Activated B cell treated with CpG ODN at 0.5 μM for 24 hours (primary cell): ENCODE measurements at regions of chr3 and their contacts with region 1.

Region 1: DNA sequence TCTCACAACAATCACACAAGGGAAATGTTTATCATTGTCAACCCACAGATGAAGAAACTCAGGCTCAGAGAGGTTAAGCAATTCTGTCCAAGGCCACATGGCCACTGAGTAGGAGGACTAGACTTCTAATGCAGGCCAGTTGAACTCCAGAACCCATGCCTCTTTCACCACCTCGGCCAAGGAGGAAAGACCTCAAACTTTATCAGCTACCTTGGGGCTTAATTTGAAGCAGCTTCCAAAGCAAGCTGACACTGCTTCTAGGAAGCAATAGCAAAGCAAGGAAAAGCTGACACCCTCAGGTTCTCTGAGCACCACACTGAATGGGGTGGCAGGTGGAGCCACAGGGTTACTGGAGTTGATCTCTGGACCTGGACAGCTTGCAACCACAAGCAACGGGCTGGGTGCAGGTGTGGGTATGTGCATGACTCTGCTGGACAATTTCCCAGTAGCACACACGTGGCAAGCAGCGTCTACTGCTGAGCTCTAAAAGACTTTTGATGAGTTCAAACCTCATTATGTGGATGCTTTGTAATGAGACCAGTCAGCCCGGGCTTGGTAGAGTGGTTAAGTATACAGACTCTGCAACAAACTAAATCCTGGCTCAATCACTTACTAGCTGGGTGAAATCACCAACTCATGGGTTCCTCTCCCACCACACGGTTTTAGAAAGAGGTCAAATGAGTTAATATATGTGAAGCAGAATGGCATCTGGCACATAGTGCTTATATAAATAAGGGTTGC is 23.1 kb downstream of the CCNL1 start:
- DNase-seq: no peak
- ATAC-seq: no peak
- H3K4me3 Mint-ChIP-seq: no peak overlapping the region
- H3K27ac Mint-ChIP-seq: no peak overlapping the region
- H3K4me1 Mint-ChIP-seq: peaks cover 5% of the 10 kb centered on the region
- H3K27me3 Mint-ChIP-seq: no peaks in the 10 kb centered on the region
- CTCF ChIP-seq: no peak

Region 2: GRCh38 chr3:156044634-156044975 is 1092.2 kb before region 1 on chr3:
- CTCF ChIA-PET with region 1: no interaction called
- POLR2A ChIA-PET with region 1: no interaction called
- intact Hi-C with region 1: loop called (anchors 2 kb)
- DNase-seq: no peak
- ATAC-seq: no peak
- H3K4me3 Mint-ChIP-seq: no peak overlapping the region
- H3K27ac Mint-ChIP-seq: no peak overlapping the region
- H3K4me1 Mint-ChIP-seq: no peaks in the 10 kb centered on the region
- H3K27me3 Mint-ChIP-seq: peaks cover 20% of the 10 kb centered on the region
- CTCF ChIP-seq: no peak

Region 3: GRCh38 chr3:156449712-156450574 is 686.9 kb before region 1 on chr3:
- CTCF ChIA-PET with region 1: no interaction called
- POLR2A ChIA-PET with region 1: no interaction called
- intact Hi-C with region 1: loop called (anchors 1 kb)
- DNase-seq: no peak
- ATAC-seq: no peak
- H3K4me3 Mint-ChIP-seq: no peak overlapping the region
- H3K27ac Mint-ChIP-seq: no peak overlapping the region
- H3K4me1 Mint-ChIP-seq: peaks cover 10% of the 10 kb centered on the region
- H3K27me3 Mint-ChIP-seq: peaks cover 13% of the 10 kb centered on the region
- CTCF ChIP-seq: no peak

Region 4: DNA sequence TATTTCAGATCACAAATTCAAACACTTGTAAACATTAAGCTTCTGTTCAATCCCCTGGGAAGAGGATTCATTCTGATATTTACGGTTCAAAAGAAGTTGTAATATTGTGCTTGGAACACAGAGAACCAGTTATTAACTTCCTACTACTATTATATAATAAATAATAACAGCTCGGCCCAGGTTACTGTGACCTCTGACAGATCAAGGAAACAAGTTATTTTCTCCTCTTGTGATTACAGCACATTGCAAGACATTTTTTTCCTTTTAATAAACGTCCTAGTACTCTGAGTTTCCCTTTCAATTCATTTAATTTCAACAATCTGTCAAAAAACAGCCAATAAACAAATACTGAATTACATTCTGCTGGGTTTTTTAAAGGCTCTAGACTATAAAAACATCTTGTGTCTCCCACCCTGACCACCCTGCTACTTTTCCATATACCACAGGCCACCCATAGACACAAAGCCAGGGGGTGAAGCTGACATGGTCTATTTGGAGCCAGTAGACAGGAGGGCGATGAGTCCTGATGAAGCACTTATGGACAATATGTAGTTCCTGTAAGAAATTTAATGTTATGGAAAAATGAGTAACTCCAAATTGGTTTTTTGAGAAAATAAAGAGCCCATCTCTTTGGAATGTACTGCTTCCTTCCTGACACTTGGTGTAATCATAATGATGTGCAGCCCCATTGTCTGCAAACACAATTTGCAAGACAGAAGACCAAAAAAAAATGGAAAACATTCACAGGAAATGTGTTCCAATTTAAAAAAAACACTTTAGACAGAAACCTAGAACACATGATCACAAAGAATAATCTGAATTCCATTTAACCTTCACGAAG is 593.9 kb before region 1 on chr3:
- CTCF ChIA-PET with region 1: interaction called, 3 read pairs
- POLR2A ChIA-PET with region 1: no interaction called
- intact Hi-C with region 1: loop called (anchors 5 kb)
- DNase-seq: no peak
- ATAC-seq: no peak
- H3K4me3 Mint-ChIP-seq: no peak overlapping the region
- H3K27ac Mint-ChIP-seq: no peak overlapping the region
- H3K4me1 Mint-ChIP-seq: no peaks in the 10 kb centered on the region
- H3K27me3 Mint-ChIP-seq: no peaks in the 10 kb centered on the region
- CTCF ChIP-seq: no peak

Region 5: GRCh38 chr3:156816800-156817645 is 319.8 kb before region 1 on chr3:
- CTCF ChIA-PET with region 1: interaction called, 4 read pairs
- POLR2A ChIA-PET with region 1: no interaction called
- intact Hi-C with region 1: loop called (anchors 5 kb)
- DNase-seq: peak; percentile 93
- ATAC-seq: peak; percentile 83
- H3K4me3 Mint-ChIP-seq: peak overlapping the region; percentile 94
- H3K27ac Mint-ChIP-seq: peak overlapping the region; percentile 99
- H3K4me1 Mint-ChIP-seq: peaks cover 42% of the 10 kb centered on the region
- H3K27me3 Mint-ChIP-seq: no peaks in the 10 kb centered on the region
- CTCF ChIP-seq: no peak